Activated CD4-positive, alpha-beta T cell treated with anti-CD3 and anti-CD28 coated beads, Interleukin-2, amount 10 ng/mL, durations not matched to agents 24 days and 14 days (primary cell): ENCODE measurements at regions of chr4 and their contacts with region 1.

Region 1: GRCh38 chr4:109472343-109472761 is 38.7 kb downstream of the SEC24B start:
- DNase-seq: no peak
- H3K4me3 Mint-ChIP-seq: no peak overlapping the region
- H3K27ac Mint-ChIP-seq: peak overlapping the region; percentile 6
- H3K4me1 Mint-ChIP-seq: peaks cover 31% of the 10 kb centered on the region
- H3K27me3 Mint-ChIP-seq: no peaks in the 10 kb centered on the region

Region 2: GRCh38 chr4:109433205-109434006 is 38.9 kb before region 1 on chr4 and contains the start of gene SEC24B:
- intact Hi-C with region 1: loop called (anchors 5 kb)
- DNase-seq: peak; percentile 97
- H3K4me3 Mint-ChIP-seq: peak within 1 kb of the TSS; percentile 90
- H3K27ac Mint-ChIP-seq: peak within 1 kb of the TSS; percentile 85
- H3K4me1 Mint-ChIP-seq: peaks cover 50% of the 10 kb centered on the region
- H3K27me3 Mint-ChIP-seq: no peaks in the 10 kb centered on the region
- total RNA-seq, gene SEC24B: 32.5 and 33.6 TPM in 2 replicates

Region 3: GRCh38 chr4:109574102-109574850 is 101.9 kb after region 1 on chr4:
- intact Hi-C with region 1: no loop called
- DNase-seq: peak; percentile 63
- H3K4me3 Mint-ChIP-seq: peak overlapping the region; percentile 5
- H3K27ac Mint-ChIP-seq: peak overlapping the region; percentile 21
- H3K4me1 Mint-ChIP-seq: peaks cover 40% of the 10 kb centered on the region
- H3K27me3 Mint-ChIP-seq: no peaks in the 10 kb centered on the region